HEK293 (cell line): ENCODE measurements at regions of chr16 and their contacts with region 1.

Region 1: GRCh38 chr16:55465077-55465896 is 13.7 kb upstream of the MMP2 start:
- H3K4me3 ChIP-seq: no peak overlapping the region
- H3K27ac ChIP-seq: no peak overlapping the region
- H3K4me1 ChIP-seq: no peaks in the 10 kb centered on the region
- CTCF ChIP-seq: peak; percentile 98

Region 2: GRCh38 chr16:55453909-55454308 is 11.4 kb before region 1 on chr16:
- CTCF ChIA-PET with region 1: interaction called, 11 read pairs
- POLR2A ChIA-PET with region 1: no interaction called
- H3K4me3 ChIP-seq: no peak overlapping the region
- H3K27ac ChIP-seq: no peak overlapping the region
- H3K4me1 ChIP-seq: no peaks in the 10 kb centered on the region
- CTCF ChIP-seq: no peak

Region 3: GRCh38 chr16:55494994-55495421 is 29.7 kb after region 1 on chr16:
- CTCF ChIA-PET with region 1: interaction called, 35 read pairs
- POLR2A ChIA-PET with region 1: no interaction called
- H3K4me3 ChIP-seq: no peak overlapping the region
- H3K27ac ChIP-seq: no peak overlapping the region
- H3K4me1 ChIP-seq: peaks cover 8% of the 10 kb centered on the region; the same call in 1 of the 2 replicates
- CTCF ChIP-seq: peak; percentile 61

Region 4: GRCh38 chr16:55521792-55522191 is 56.5 kb after region 1 on chr16:
- CTCF ChIA-PET with region 1: interaction called, 14 read pairs
- POLR2A ChIA-PET with region 1: no interaction called
- H3K4me3 ChIP-seq: no peak overlapping the region
- H3K27ac ChIP-seq: no peak overlapping the region
- H3K4me1 ChIP-seq: no peaks in the 10 kb centered on the region
- CTCF ChIP-seq: no peak

Region 5: DNA sequence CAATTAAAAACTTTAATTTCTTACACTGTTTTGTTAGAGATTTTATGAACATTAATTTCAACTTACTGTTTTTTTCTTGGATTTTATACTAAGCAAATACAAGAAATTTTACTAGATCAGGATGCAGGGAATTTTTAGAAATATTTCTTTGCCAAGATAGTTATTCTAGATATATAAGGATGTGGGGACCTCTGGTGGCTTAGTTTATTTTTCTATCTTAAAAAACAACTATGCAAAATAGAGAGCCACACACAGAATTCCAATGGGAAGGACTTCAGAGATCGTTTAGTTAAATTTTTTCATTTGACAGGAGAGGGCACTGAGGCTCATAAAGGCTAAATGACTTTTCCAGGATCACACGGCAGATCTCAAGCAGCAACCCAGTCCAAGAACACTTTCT is 78.2 kb after region 1 on chr16:
- CTCF ChIA-PET with region 1: interaction called, 97 read pairs
- POLR2A ChIA-PET with region 1: no interaction called
- H3K4me3 ChIP-seq: no peak overlapping the region
- H3K27ac ChIP-seq: no peak overlapping the region
- H3K4me1 ChIP-seq: no peaks in the 10 kb centered on the region
- CTCF ChIP-seq: no peak

Region 6: GRCh38 chr16:55701442-55702319 is 236.4 kb after region 1 on chr16:
- CTCF ChIA-PET with region 1: interaction called, 407 read pairs
- POLR2A ChIA-PET with region 1: interaction called, 4 read pairs
- H3K4me3 ChIP-seq: no peak overlapping the region
- H3K27ac ChIP-seq: no peak overlapping the region
- H3K4me1 ChIP-seq: no peaks in the 10 kb centered on the region
- CTCF ChIP-seq: peak; percentile 55